ENCODE measurements at regions of chr7 and their contacts with region 1.

Region 1: DNA sequence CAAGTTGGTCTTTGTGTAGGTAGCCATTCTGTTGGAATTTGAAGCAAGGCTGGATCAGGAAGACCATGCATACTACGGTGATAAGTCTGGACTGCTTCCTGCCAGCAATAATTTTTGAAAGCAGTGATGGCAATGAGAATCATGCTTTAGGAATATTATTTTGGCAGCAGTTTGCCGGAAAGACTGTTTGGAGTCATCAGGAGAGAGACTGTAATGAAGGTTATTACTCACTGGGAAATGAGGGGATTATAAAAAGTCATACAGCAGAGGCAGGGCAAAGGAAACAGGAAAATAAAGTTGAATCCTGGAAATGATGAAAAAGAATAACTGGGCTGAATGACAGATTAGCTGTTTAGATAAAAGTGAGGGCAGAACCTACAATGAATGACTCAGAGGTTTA is 1136.8 kb upstream of the AUTS2 start:
- DNase-seq: no peak
- H3K4me3 ChIP-seq: no peak overlapping the region
- H3K27ac ChIP-seq: no peak overlapping the region
- H3K4me1 ChIP-seq: no peaks in the 10 kb centered on the region
- H3K27me3 ChIP-seq: no peaks in the 10 kb centered on the region
- CTCF ChIP-seq: no peak

Region 2: GRCh38 chr7:68321064-68321639 is 140.3 kb before region 1 on chr7:
- intact Hi-C with region 1: loop called (anchors 10 kb)
- DNase-seq: no peak
- H3K4me3 ChIP-seq: no peak overlapping the region
- H3K27ac ChIP-seq: peak overlapping the region; percentile 57 to 61
- H3K4me1 ChIP-seq: peaks cover 0 to 11% of the 10 kb centered on the region in 2 donors
- H3K27me3 ChIP-seq: no peaks in the 10 kb centered on the region
- CTCF ChIP-seq: no peak

Measured in ascending aorta (tissue), 2 donors.